K562 (cell line): ENCODE measurements at regions of chr3 and their contacts with region 1.

Region 1: DNA sequence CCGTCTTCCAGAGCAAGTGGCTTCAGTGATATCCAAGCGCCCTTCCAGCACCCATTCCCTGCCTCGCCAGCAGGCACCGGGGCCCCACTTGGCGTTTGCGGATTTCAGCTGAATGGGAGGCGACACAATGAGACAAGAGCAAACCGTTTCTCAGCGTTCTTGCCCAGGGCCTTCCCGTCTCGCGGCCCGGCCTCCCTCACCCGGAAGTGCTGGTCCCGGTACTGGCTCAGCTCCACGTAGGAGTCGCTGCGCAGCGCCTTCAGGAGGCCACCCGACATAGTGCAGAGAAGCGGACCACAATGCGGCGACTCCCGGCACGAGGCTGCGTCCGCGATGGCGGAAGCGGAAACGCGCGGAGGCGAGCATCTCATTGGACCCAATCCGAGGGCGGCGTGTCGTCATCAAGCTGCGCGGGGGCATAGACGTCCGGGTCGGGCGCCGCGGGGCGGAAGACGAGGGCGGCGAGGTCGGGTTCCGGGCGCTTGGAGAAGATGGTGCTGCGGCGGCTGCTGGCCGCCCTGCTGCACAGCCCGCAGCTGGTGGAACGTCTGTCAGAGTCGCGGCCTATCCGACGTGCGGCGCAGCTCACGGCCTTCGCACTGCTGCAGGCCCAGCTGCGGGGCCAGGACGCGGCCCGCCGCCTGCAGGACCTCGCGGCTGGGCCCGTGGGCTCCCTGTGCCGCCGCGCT is at the start of gene NCBP2:
- DNase-seq: peak; percentile 91 to 99 (median 94)
- ATAC-seq: peak; percentile 94
- H3K4me3 ChIP-seq: peak within 1 kb of the TSS; percentile 99
- H3K27ac ChIP-seq: peak within 1 kb of the TSS; percentile 93
- H3K4me1 ChIP-seq: peaks cover 7 to 12% of the 10 kb centered on the region in 2 experiments; a peak in 4 of 5 replicates
- H3K27me3 ChIP-seq: no peaks in the 10 kb centered on the region
- CTCF ChIP-seq: peak; percentile 88 to 91 (median 88)
- EP300 ChIP-seq: peak; percentile 69
- POLR2A ChIP-seq: peak; percentile 94
- RAD21 ChIP-seq: peak; percentile 52 to 62
- polyA plus RNA-seq, gene NCBP2: 56.4 to 100 TPM

Region 2: GRCh38 chr3:196528639-196529233 is 413.6 kb before region 1 on chr3:
- CTCF ChIA-PET with region 1: no interaction called
- POLR2A ChIA-PET with region 1: interaction called, 4 read pairs
- in situ Hi-C with region 1: no loop called
- intact Hi-C with region 1: loop called (anchors 10 kb)
- DNase-seq: peak; percentile 88 to 90 (median 90)
- ATAC-seq: peak; percentile 98
- H3K4me3 ChIP-seq: peak overlapping the region; percentile 53
- H3K27ac ChIP-seq: peak overlapping the region; percentile 81
- H3K4me1 ChIP-seq: peaks cover 8 to 22% of the 10 kb centered on the region in 2 experiments; a peak in 4 of 5 replicates
- H3K27me3 ChIP-seq: no peaks in the 10 kb centered on the region
- CTCF ChIP-seq: peak; percentile 81 to 87 (median 84)
- EP300 ChIP-seq: no peak
- POLR2A ChIP-seq: peak; percentile 74
- RAD21 ChIP-seq: peak; percentile 77 to 79

Region 3: GRCh38 chr3:196711838-196712513 is 230.4 kb before region 1 on chr3 and contains the starts of genes CEP19 and PIGX:
- CTCF ChIA-PET with region 1: no interaction called
- POLR2A ChIA-PET with region 1: no interaction called
- in situ Hi-C with region 1: no loop called
- intact Hi-C with region 1: loop called (anchors 10 kb)
- DNase-seq: peak; percentile 91 to 99 (median 98)
- ATAC-seq: peak; percentile 93
- H3K4me3 ChIP-seq: peak within 1 kb of the TSS; percentile 58
- H3K27ac ChIP-seq: peak within 1 kb of the TSS; percentile 70
- H3K4me1 ChIP-seq: peaks cover 10 to 21% of the 10 kb centered on the region in 2 experiments
- H3K27me3 ChIP-seq: no peaks in the 10 kb centered on the region
- CTCF ChIP-seq: peak in 1 of 3 experiments; percentile 4; a peak in 1 of 6 replicates
- EP300 ChIP-seq: 0 out of 2 replicates have a peak, but pooled peaks have one; percentile 2
- POLR2A ChIP-seq: peak; percentile 66
- RAD21 ChIP-seq: no peak
- polyA plus RNA-seq, gene CEP19: 3.4 to 4.2 TPM
- polyA plus RNA-seq, gene PIGX: 3.7 to 5.1 TPM

Region 4: GRCh38 chr3:196837819-196838420 is 104.5 kb before region 1 on chr3:
- CTCF ChIA-PET with region 1: interaction called, 3 read pairs
- POLR2A ChIA-PET with region 1: no interaction called
- in situ Hi-C with region 1: no loop called
- intact Hi-C with region 1: loop called (anchors 2 kb)
- DNase-seq: peak; percentile 72 to 84 (median 78)
- ATAC-seq: peak; percentile 83
- H3K4me3 ChIP-seq: no peak overlapping the region
- H3K27ac ChIP-seq: no peak overlapping the region
- H3K4me1 ChIP-seq: peaks cover 3 to 8% of the 10 kb centered on the region in 2 experiments; a peak in 4 of 5 replicates
- H3K27me3 ChIP-seq: no peaks in the 10 kb centered on the region
- CTCF ChIP-seq: peak; percentile 78 to 92 (median 90)
- EP300 ChIP-seq: no peak
- POLR2A ChIP-seq: no peak
- RAD21 ChIP-seq: peak; percentile 78 to 86

Region 5: DNA sequence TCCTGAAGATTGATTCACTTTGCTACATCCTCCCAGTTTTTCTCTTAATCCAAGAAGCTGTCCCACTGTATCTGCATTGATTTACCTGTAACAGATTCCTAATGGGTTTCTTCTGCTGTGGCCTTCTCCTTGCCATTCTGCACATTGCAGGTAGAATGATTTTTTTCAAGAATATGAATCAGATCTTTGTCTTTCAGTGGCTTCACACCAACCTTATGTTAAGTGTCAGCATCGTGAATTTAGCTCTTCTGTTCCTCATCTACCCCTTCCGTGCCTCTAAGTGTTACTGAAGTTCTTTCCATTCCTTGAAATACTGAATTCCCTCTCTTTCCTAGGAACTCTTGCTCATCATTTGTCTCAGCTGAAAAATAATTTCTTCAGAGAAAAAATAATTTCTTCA is 67.1 kb before region 1 on chr3:
- CTCF ChIA-PET with region 1: no interaction called
- POLR2A ChIA-PET with region 1: interaction called, 12 read pairs
- in situ Hi-C with region 1: no loop called
- intact Hi-C with region 1: no loop called
- DNase-seq: no peak
- ATAC-seq: no peak
- H3K4me3 ChIP-seq: no peak overlapping the region
- H3K27ac ChIP-seq: no peak overlapping the region
- H3K4me1 ChIP-seq: peaks cover 0 to 3% of the 10 kb centered on the region in 2 experiments; a peak in 1 of 5 replicates
- H3K27me3 ChIP-seq: no peaks in the 10 kb centered on the region
- CTCF ChIP-seq: no peak
- EP300 ChIP-seq: no peak
- POLR2A ChIP-seq: no peak
- RAD21 ChIP-seq: no peak

Region 6: DNA sequence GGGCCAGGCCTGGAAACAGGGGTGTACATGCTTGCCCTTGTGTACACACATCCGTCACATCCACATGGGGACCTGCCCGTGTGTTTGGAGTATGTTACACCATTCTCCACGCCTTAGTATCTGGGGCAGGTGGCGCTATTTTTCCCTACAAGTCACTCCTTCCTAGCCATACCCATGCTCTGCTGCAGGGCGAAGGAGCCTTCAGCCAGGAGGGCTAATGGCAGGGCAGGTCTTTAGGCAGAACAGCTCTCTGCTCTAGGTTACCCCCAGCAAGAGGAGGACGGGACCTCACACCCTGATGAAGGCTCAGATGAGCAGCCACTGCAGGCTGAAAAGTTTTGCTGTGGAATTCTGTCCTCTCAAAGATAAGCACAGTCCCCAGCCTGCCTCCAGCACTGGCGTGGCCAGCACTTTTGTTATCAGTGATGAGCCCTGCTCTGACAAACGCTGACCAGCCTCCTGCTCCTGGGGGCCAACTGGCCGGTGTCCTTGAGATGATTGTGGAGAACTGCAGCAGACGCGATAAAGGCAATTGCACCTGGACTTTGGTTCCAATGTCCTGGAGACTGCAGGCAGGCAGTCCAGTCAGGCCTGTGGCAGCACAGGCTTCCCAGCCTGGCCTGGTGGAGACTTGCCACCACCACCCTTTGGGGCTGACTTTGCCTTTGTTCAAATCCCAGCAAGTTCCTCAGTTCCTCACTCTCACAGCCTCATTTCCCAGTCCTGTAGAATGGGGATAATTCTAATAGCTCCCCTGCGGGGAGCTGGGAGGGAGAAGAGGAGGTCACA is 46.1 kb after region 1 on chr3:
- CTCF ChIA-PET with region 1: no interaction called
- POLR2A ChIA-PET with region 1: no interaction called
- in situ Hi-C with region 1: no loop called
- intact Hi-C with region 1: loop called (anchors 1 kb)
- DNase-seq: peak; percentile 78 to 97 (median 90)
- ATAC-seq: peak; percentile 98
- H3K4me3 ChIP-seq: no peak overlapping the region
- H3K27ac ChIP-seq: peak overlapping the region; percentile 59
- H3K4me1 ChIP-seq: peaks cover 18 to 44% of the 10 kb centered on the region in 2 experiments
- H3K27me3 ChIP-seq: no peaks in the 10 kb centered on the region
- CTCF ChIP-seq: peak; percentile 40 to 65 (median 54); a peak in 5 of 6 replicates
- EP300 ChIP-seq: peak; percentile 87
- POLR2A ChIP-seq: no peak
- RAD21 ChIP-seq: peak in 1 of 2 experiments; percentile 23; a peak in 2 of 4 replicates